Activated CD4-positive, alpha-beta T cell treated with anti-CD3 and anti-CD28 coated beads, Interleukin-2, amount 10 ng/mL, durations not matched to agents 24 days and 14 days (primary cell): ENCODE measurements at regions of chr13 and their contacts with region 1.

Region 1: GRCh38 chr13:50129081-50129705 is 113.9 kb downstream of the KCNRG start:
- DNase-seq: peak; percentile 80
- H3K4me3 Mint-ChIP-seq: peak overlapping the region; percentile 77
- H3K27ac Mint-ChIP-seq: peak overlapping the region; percentile 91
- H3K4me1 Mint-ChIP-seq: peaks cover 52% of the 10 kb centered on the region
- H3K27me3 Mint-ChIP-seq: peaks cover 40% of the 10 kb centered on the region

Region 2: DNA sequence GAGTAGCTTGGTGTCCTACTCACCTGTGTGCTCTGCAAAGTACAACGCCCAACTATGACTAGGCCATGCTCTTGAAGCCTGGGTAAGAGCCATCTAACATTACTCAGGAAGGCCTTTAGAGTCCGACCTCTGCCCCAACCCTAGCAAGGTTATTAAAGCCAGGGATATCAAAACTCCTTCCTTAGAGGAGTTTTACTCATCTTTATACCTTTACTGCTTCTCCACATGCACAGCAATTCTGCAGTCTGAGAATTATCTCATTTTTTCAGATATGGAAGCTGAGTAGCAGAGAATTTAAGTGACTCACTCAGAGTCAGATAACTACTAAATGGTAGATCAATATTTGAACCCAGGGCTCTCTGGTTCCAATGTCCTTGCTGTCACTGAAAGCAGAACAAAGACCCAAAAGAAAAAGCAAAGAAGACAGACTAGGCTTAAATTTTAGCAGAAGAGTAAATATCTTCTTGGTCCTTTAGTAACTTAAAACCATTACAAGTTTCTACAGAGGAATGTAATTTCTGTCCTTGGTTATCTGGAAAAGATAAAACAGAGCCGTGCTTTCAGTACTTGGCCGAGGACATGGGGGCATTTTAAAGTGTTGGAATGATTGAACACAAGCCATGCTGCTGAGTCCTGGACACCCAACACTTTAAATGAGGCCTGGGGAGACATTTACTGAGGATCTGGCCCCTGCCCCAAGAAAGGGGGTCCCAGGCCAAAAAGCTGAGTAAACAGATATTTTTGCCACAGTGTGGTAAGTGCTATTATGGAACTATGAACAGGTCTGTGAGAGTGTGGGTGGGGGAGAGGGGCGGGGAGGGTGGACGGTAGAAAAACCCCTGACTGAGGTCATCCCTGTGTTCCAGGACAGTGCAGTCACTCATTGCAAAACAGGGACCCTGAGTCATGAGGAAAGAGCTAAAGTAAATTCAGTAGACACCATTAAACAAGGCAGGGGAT is 318.3 kb before region 1 on chr13:
- intact Hi-C with region 1: no loop called
- DNase-seq: no peak
- H3K4me3 Mint-ChIP-seq: no peak overlapping the region
- H3K27ac Mint-ChIP-seq: no peak overlapping the region
- H3K4me1 Mint-ChIP-seq: no peaks in the 10 kb centered on the region
- H3K27me3 Mint-ChIP-seq: peaks cover 16% of the 10 kb centered on the region

Region 3: DNA sequence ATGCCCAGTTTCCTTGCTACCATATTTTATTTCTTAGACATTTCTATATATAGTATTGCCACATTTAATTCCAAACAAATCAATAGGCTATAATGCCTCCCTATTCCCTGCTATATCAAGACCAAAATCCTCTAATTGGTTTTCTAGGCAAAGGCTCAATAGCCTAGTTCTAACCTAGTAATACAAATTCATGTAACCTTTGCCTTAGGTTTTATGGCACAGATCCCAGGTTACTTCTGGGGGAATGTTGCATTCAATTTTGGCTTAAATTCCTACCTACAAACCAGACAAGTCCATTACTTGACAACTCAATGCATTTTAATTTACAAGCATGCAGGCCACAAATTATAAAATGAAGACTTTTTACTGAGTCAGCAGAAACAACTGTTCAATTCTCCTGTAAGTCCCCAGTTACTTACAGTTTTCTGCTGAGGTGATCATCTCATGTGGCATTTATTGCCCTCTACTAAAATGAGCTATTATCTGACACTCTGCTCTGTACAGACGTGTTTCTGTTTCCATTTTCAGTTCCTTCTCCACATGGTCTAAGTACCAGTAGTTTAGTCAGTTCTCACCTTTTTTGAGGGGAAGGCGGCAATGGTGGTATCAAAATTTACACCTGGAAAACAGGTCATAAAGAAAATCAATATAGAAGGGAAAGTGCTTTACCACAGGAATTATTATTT is 102.3 kb before region 1 on chr13:
- intact Hi-C with region 1: no loop called
- DNase-seq: no peak
- H3K4me3 Mint-ChIP-seq: no peak overlapping the region
- H3K27ac Mint-ChIP-seq: no peak overlapping the region
- H3K4me1 Mint-ChIP-seq: peaks cover 10% of the 10 kb centered on the region
- H3K27me3 Mint-ChIP-seq: no peaks in the 10 kb centered on the region

Region 4: DNA sequence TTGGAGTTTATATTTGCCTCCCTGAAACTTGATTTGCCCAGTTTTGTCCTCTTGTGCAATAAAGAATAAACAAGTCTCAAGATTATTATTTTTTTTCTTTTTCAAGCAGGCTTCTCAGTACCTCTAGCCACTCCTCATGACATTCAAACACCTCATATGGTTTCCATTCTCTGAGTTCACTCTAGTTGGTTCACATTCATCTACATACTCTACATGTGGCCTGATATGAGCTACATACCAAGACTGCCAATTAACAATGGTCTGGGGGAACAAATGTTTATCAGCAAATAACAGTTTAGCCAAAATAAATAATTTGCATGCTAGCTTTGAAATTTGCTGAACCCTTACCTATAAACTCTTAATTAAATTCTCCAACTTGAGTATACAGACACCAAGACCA is 91.4 kb before region 1 on chr13:
- intact Hi-C with region 1: no loop called
- DNase-seq: no peak
- H3K4me3 Mint-ChIP-seq: no peak overlapping the region
- H3K27ac Mint-ChIP-seq: no peak overlapping the region
- H3K4me1 Mint-ChIP-seq: no peaks in the 10 kb centered on the region
- H3K27me3 Mint-ChIP-seq: no peaks in the 10 kb centered on the region

Region 5: DNA sequence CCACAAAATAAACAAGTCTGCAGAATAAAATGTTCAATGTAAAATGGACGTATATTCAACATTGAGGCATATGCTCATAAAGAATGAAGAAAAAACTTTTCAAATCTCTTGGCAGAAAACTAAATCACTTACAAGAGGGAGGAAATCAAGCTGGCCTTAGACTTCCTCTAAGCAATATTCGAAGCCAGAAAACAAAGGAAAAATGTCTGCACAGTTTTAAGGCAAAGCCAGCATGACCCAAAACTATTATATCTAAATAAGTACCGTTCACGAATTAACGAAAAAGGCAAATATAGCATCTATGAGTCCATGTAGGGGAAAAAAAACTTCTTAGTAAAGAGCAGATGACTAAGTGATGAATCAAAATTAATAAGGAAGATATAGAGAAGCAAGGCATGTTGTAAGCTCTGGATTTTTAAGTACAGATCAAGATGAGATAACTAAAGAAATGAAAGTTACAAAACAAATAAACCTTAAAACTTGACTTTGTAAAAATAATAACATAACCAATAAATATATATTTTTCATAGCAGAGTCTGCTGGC is 12.7 kb before region 1 on chr13:
- intact Hi-C with region 1: no loop called
- DNase-seq: no peak
- H3K4me3 Mint-ChIP-seq: no peak overlapping the region
- H3K27ac Mint-ChIP-seq: no peak overlapping the region
- H3K4me1 Mint-ChIP-seq: peaks cover 5% of the 10 kb centered on the region
- H3K27me3 Mint-ChIP-seq: no peaks in the 10 kb centered on the region

Region 6: DNA sequence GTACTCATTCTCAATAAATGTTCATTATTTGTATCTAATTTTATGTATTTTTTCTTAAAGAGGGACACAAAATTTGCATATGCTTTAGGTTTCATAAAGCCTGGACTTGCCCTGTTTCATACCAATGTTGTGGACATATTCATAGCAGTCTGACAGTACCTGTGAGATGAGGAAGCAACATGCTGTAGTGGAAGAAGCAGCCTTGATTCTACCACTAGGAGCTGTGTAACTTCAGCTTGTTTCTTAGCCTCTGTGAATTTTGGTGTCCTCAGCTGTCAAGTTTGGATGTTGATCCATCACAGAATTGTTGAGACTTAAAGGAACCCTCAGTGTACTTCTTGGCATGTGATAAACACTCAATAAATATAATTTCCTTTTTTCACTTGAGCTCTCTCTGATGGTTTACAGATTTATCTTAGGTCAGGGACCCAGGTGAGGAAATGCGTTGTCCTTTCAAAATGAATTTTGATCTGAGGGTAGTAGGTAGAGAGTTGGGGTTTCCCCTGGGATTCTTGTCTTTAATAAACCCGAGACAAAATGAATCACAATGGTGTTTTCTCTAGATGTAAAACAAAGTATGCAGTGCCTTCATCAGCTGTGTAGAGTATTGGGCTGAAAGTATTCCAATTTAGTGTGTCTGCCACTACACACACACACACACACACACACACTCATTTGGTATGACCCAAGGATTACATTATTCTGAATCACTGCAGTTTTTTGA is 38.2 kb after region 1 on chr13:
- intact Hi-C with region 1: loop called (anchors 2 kb)
- DNase-seq: no peak
- H3K4me3 Mint-ChIP-seq: no peak overlapping the region
- H3K27ac Mint-ChIP-seq: no peak overlapping the region
- H3K4me1 Mint-ChIP-seq: peaks cover 8% of the 10 kb centered on the region
- H3K27me3 Mint-ChIP-seq: peaks cover 33% of the 10 kb centered on the region

Region 7: GRCh38 chr13:50229960-50230661 is 100.9 kb after region 1 on chr13:
- intact Hi-C with region 1: loop called (anchors 1 kb)
- DNase-seq: peak; percentile 60
- H3K4me3 Mint-ChIP-seq: peak overlapping the region; percentile 32
- H3K27ac Mint-ChIP-seq: peak overlapping the region; percentile 20
- H3K4me1 Mint-ChIP-seq: peaks cover 51% of the 10 kb centered on the region
- H3K27me3 Mint-ChIP-seq: peaks cover 26% of the 10 kb centered on the region

Region 8: GRCh38 chr13:50236898-50237318 is 107.7 kb after region 1 on chr13:
- intact Hi-C with region 1: loop called (anchors 2 kb)
- DNase-seq: peak; percentile 83
- H3K4me3 Mint-ChIP-seq: peak overlapping the region; percentile 23
- H3K27ac Mint-ChIP-seq: peak overlapping the region; percentile 84
- H3K4me1 Mint-ChIP-seq: peaks cover 34% of the 10 kb centered on the region
- H3K27me3 Mint-ChIP-seq: peaks cover 29% of the 10 kb centered on the region

Region 9: GRCh38 chr13:50244713-50245574 is 115.8 kb after region 1 on chr13:
- intact Hi-C with region 1: loop called (anchors 1 kb)
- DNase-seq: peak; percentile 78
- H3K4me3 Mint-ChIP-seq: peak overlapping the region; percentile 41
- H3K27ac Mint-ChIP-seq: peak overlapping the region; percentile 73
- H3K4me1 Mint-ChIP-seq: peaks cover 34% of the 10 kb centered on the region
- H3K27me3 Mint-ChIP-seq: peaks cover 33% of the 10 kb centered on the region